ENCODE measurements at regions of chr3 and their contacts with region 1.

Region 1: GRCh38 chr3:185807445-185808068 is 17.3 kb downstream of the IGF2BP2 start:
- DNase-seq: no peak
- ATAC-seq: peak; percentile 76; the same call in 1 of the 2 replicates
- H3K4me3 ChIP-seq: no peak overlapping the region
- H3K27ac ChIP-seq: no peak overlapping the region
- H3K4me1 ChIP-seq: peaks cover 20% of the 10 kb centered on the region
- H3K27me3 ChIP-seq: no peaks in the 10 kb centered on the region
- CTCF ChIP-seq: no peak

Region 2: DNA sequence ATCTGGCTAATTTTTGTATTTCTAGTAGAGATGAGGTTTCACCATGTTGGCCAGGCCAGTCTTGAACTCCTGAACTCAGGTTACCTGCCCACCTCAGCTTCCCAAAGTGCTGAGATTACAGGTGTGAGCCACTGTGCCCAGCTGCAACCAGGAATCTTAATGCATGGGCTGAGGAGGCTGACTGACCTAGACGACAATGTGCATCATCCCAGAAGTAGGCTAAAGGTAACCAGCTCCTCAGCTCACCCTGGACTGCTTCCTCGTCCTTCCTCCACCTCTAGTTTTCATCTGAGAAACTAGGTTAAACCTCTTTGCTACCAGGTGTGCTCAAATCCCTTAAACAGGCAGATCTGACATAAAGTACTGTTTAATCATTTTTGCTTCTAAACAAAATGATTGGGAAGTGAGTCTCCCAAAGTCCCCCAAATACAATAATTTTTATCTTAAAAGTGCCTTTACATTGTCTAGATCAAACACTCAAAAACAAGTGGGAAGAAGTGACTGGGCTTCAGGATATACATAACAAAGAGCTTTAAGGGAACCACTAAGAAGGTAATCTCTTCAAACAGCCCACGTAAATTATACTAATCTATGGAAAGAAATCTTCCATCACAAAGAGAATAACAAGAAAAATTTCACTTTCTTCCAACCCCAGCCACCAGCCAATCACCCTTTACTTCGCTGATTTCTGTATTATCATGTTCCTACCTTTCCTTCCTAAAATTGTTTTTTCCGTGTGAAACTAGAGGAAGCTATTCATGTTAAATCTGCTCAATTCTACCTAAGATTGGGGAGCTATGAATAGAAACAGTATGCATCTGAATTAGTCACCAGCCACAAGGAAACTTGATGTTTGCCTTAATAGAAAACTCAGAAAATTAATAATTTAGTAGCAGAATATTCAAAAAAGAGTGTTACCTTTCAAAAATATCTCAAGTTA is 17.4 kb before region 1 on chr3:
- CTCF ChIA-PET with region 1: no interaction called
- POLR2A ChIA-PET with region 1: interaction called, 10 read pairs
- in situ Hi-C with region 1: no loop called
- intact Hi-C with region 1: no loop called
- DNase-seq: no peak
- ATAC-seq: no peak
- H3K4me3 ChIP-seq: no peak overlapping the region
- H3K27ac ChIP-seq: no peak overlapping the region
- H3K4me1 ChIP-seq: peaks cover 28% of the 10 kb centered on the region
- H3K27me3 ChIP-seq: no peaks in the 10 kb centered on the region
- CTCF ChIP-seq: no peak

Measured in Panc1 (cell line).